ENCODE measurements at regions of chr14 and their contacts with region 1.

Region 1: GRCh38 chr14:75088574-75089373 is 19.3 kb downstream of the ZC2HC1C start:
- DNase-seq: peak; percentile 72
- H3K4me3 Mint-ChIP-seq: no peak overlapping the region
- H3K27ac Mint-ChIP-seq: no peak overlapping the region
- H3K4me1 Mint-ChIP-seq: no peaks in the 10 kb centered on the region
- H3K27me3 Mint-ChIP-seq: no peaks in the 10 kb centered on the region
- CTCF ChIP-seq: peak; percentile 75

Region 2: GRCh38 chr14:74860906-74861733 is 227.7 kb before region 1 on chr14:
- CTCF ChIA-PET with region 1: interaction called, 39 read pairs
- POLR2A ChIA-PET with region 1: interaction called, 5 read pairs
- intact Hi-C with region 1: loop called (anchors 1 kb)
- DNase-seq: peak; percentile 89
- H3K4me3 Mint-ChIP-seq: no peak overlapping the region
- H3K27ac Mint-ChIP-seq: no peak overlapping the region
- H3K4me1 Mint-ChIP-seq: no peaks in the 10 kb centered on the region
- H3K27me3 Mint-ChIP-seq: peaks cover 6% of the 10 kb centered on the region
- CTCF ChIP-seq: peak; percentile 64

Region 3: DNA sequence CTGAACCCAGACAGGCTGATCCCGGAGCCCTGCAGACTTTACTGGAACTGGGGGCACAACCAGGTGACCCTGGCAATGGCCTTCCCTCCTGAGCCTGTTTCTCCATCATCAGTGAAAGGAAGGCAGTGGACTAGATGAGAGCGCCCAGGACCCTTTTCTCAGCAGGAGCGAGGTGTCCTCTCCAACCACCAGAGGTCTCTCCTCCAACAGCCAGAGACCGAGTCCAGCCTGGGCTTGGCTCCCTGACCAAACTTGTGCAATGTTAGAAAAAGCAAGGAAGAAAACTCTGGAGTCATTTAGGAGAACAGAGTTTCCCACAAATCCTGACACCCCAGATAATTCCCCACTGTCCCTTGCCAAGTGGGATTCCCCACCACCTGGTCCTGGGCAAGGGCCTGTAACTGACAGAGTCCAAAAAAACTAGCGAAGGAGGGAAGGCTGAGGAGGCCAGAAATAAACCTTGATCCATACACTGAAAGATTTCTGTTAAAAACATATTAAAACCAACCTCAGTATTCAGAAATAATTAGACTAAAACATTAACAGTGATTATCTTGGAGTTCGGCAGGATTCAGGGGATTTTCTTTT is 174.7 kb before region 1 on chr14:
- CTCF ChIA-PET with region 1: interaction called, 10 read pairs
- POLR2A ChIA-PET with region 1: no interaction called
- intact Hi-C with region 1: loop called (anchors 1 kb)
- DNase-seq: peak; percentile 81
- H3K4me3 Mint-ChIP-seq: no peak overlapping the region
- H3K27ac Mint-ChIP-seq: no peak overlapping the region
- H3K4me1 Mint-ChIP-seq: peaks cover 14% of the 10 kb centered on the region
- H3K27me3 Mint-ChIP-seq: no peaks in the 10 kb centered on the region
- CTCF ChIP-seq: peak; percentile 61

Region 4: DNA sequence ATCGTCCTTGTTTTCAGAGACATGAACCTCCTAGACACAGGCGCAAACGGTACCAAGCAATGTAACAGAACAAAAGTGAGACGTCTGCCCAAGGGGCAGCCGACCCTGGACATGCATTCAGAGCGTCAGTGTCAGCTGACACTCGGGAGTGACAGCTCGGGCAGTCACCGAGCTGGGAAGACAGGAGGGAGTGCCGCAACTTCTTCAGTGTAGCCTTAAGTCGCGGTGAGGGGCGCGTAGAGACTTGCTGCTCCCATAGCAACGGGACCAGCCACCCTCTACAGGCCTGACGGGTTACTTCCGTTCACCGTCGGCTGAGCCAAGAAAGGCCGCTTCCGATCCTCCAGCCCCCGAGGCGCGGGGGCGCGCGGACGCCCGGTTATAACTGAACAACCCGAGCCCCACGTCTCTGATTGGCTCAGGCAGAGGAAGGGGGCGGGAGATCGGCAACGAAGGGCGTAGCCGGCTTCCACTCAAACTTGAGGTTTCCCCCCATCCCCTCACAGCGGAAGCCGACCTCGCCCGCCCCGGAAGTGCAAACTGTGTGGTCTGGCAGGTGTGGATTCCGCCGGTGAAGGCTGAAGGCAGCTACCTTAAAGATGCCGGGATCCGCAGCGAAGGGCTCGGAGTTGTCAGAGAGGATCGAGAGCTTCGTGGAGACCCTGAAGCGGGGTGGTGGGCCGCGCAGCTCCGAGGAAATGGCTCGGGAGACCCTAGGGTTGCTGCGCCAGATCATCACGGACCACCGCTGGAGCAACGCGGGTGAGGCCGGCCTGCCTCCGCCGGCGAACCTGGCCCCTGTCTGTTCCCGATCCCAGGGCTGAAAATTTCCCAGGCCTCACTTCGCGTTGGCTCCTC is 86.2 kb before region 1 on chr14 and contains the start of gene EIF2B2:
- CTCF ChIA-PET with region 1: interaction called, 8 read pairs
- POLR2A ChIA-PET with region 1: no interaction called
- intact Hi-C with region 1: loop called (anchors 2 kb)
- DNase-seq: peak; percentile 97
- H3K4me3 Mint-ChIP-seq: peak within 1 kb of the TSS; percentile 94
- H3K27ac Mint-ChIP-seq: peak within 1 kb of the TSS; percentile 72
- H3K4me1 Mint-ChIP-seq: peaks cover 16% of the 10 kb centered on the region
- H3K27me3 Mint-ChIP-seq: no peaks in the 10 kb centered on the region
- CTCF ChIP-seq: no peak
- total RNA-seq, gene EIF2B2: 53.8 and 57.9 TPM in 2 replicates

Region 5: GRCh38 chr14:75069045-75069810 is 19.5 kb before region 1 on chr14 and contains the start of gene ZC2HC1C:
- CTCF ChIA-PET with region 1: interaction called, 13 read pairs
- POLR2A ChIA-PET with region 1: interaction called, 11 read pairs
- intact Hi-C with region 1: no loop called
- DNase-seq: peak; percentile 90
- H3K4me3 Mint-ChIP-seq: no peak within 1 kb of the TSS
- H3K27ac Mint-ChIP-seq: no peak within 1 kb of the TSS
- H3K4me1 Mint-ChIP-seq: peaks cover 6% of the 10 kb centered on the region
- H3K27me3 Mint-ChIP-seq: no peaks in the 10 kb centered on the region
- CTCF ChIP-seq: no peak
- total RNA-seq, gene ZC2HC1C: 1.3 and 2.2 TPM in 2 replicates

Region 6: GRCh38 chr14:75107186-75107585 is 18.4 kb after region 1 on chr14:
- CTCF ChIA-PET with region 1: interaction called, 49 read pairs
- POLR2A ChIA-PET with region 1: no interaction called
- intact Hi-C with region 1: no loop called
- DNase-seq: no peak
- H3K4me3 Mint-ChIP-seq: no peak overlapping the region
- H3K27ac Mint-ChIP-seq: no peak overlapping the region
- H3K4me1 Mint-ChIP-seq: no peaks in the 10 kb centered on the region
- H3K27me3 Mint-ChIP-seq: no peaks in the 10 kb centered on the region
- CTCF ChIP-seq: no peak

Region 7: DNA sequence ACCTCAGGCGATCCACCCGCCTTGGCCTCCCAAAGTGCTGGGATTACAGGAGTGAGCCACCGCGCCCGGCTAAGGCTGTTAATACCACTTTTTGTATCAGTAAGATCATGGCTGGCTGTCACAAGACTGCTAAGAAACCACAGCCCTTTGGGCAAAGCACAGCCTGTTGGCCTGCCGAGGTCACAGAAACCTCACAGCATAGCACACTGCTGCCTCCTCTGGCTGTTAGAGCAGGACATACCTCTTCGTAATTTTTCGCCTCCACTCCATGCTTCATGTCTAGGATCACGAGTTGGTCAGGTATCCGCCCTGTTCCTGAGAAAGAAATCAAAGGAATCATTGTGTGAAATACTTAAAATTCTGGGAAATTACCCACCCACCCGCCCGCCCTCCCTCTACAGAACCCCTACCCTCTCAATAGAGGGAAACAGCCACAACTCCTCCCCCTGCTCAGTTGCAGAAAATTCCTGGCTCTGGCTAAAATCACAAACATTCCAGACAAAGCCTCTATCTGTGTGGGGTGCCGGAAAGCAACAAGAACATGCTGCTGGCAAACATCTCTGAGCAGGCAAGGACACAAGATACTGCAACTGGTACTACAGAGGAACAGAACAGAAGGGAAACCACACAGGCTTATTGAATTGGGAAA is 58.8 kb after region 1 on chr14:
- CTCF ChIA-PET with region 1: no interaction called
- POLR2A ChIA-PET with region 1: no interaction called
- intact Hi-C with region 1: no loop called
- DNase-seq: peak; percentile 38
- H3K4me3 Mint-ChIP-seq: peak overlapping the region; percentile 66
- H3K27ac Mint-ChIP-seq: peak overlapping the region; percentile 91
- H3K4me1 Mint-ChIP-seq: peaks cover 60% of the 10 kb centered on the region
- H3K27me3 Mint-ChIP-seq: no peaks in the 10 kb centered on the region
- CTCF ChIP-seq: peak; percentile 32